PC-9 (cell line): ENCODE measurements at regions of chr7 and their contacts with region 1.

Region 1: DNA sequence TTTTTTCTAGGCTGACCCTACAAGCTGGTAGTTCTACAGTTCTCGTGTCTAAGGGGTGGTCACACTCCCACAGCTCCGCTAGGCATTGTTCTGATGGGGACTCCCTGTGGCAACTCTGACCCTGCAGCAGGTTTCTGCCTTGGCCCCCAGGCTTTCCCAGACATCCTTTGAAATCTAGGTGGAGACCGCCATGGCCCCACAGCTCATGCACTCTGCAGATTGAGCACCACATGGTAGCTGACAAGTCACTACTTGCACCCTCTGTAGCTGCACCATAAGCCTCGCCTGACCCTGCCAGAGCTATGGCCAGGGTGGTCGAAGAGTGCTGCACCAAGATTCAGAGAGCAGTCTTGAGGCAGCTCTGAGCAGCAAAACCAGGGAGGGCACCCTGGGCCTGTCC is 275.6 kb downstream of the LHFPL3 start:
- DNase-seq: no peak
- H3K4me3 ChIP-seq: no peak overlapping the region
- H3K27ac ChIP-seq: no peak overlapping the region
- H3K4me1 ChIP-seq: no peaks in the 10 kb centered on the region
- H3K27me3 ChIP-seq: no peaks in the 10 kb centered on the region
- CTCF ChIP-seq: no peak

Region 2: GRCh38 chr7:103929871-103930311 is 674.1 kb before region 1 on chr7:
- CTCF ChIA-PET with region 1: interaction called, 12 read pairs
- POLR2A ChIA-PET with region 1: no interaction called
- intact Hi-C with region 1: no loop called
- DNase-seq: no peak
- H3K4me3 ChIP-seq: no peak overlapping the region
- H3K27ac ChIP-seq: no peak overlapping the region
- H3K4me1 ChIP-seq: no peaks in the 10 kb centered on the region
- H3K27me3 ChIP-seq: 0 out of 2 replicates have a peak, but pooled peaks cover 4% of the 10 kb centered on the region
- CTCF ChIP-seq: no peak

Region 3: DNA sequence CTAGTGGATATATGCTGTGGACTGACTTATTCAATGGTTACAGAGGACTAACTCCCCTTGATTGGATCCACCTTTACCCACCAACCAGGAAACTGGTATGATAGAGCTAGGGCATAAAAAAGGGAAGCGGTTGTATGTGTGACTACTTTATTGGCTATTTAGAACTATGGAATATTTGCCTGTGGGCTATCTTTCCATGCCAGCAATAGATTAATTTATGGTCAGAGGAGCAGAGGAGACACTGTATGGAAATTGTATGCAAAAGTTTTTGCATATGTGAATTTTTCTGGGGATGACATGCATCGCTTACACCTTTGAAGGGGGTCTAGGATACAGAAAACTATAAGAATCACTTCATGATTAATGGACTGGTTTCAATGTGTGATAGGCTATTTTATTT is 169.8 kb before region 1 on chr7:
- CTCF ChIA-PET with region 1: no interaction called
- POLR2A ChIA-PET with region 1: no interaction called
- intact Hi-C with region 1: no loop called
- DNase-seq: no peak
- H3K4me3 ChIP-seq: no peak overlapping the region
- H3K27ac ChIP-seq: no peak overlapping the region
- H3K4me1 ChIP-seq: no peaks in the 10 kb centered on the region
- H3K27me3 ChIP-seq: no peaks in the 10 kb centered on the region
- CTCF ChIP-seq: no peak